ENCODE measurements at regions of chr19 and their contacts with region 1.

Region 1: DNA sequence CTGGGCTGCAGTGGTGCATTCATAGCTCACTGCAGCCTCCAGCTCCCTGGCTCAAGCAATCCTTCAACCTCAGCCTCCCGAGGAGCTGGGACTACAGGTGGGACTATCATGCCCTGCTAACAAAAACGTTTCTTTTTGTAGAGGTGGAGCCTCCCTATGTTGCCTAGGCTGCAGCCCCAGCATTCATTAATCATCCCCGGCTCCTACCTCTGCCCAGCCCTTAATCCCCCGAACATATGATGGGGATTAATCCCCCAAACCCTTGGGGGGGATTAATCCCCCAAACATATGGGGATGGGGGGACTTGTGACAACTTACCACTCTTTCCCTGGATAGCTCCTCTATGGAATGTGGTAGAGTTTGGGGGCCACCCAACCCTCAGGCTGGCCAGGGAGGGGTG is 45.9 kb downstream of the SUGP2 start:
- DNase-seq: no peak
- H3K4me3 ChIP-seq: no peak overlapping the region
- H3K27ac ChIP-seq: no peak overlapping the region
- H3K4me1 ChIP-seq: peaks cover 2 to 18% (median 11%) of the 10 kb centered on the region in 4 experiments
- H3K27me3 ChIP-seq: peaks cover 0 to 7% (median 0%) of the 10 kb centered on the region in 5 experiments

Region 2: DNA sequence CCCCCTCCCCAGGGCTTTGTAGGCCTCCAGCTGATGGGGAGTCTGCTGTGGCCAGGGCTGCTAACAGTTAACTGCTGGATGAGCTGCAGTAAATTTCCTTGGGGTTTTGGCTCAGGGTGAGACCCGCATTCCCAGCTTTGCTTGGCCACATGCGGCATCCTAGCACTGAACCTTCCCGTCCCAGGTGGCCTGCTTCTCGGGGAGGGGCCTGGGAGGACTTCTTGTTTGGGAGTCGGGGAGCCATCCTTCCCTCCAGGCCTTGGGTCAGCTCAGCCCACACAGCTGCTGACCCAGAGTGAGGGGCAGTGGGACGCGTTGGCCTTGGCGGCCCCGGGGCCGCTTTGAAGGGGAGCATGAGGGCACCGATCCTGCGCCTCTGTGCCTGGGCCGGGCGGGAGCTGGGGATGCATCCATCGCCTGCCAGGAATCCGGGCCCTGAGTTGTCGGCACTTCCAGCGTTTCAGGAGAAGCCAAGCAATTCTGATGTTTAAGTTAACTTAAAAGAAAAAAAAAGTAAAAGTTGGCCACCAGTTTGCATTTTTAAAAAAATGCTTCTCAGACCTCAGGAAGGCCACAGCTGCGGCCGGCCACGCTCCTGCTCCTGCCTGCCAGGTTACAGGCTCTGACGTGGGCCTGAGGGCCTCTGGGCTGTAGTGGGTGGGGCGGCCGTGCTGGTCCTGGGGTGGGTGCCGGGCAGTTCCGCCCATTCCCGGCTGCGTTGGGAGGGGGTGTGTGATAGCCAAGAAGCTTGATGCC is 276.3 kb before region 1 on chr19:
- CTCF ChIA-PET with region 1: no interaction called
- POLR2A ChIA-PET with region 1: no interaction called
- DNase-seq: no peak
- H3K4me3 ChIP-seq: no peak overlapping the region
- H3K27ac ChIP-seq: no peak overlapping the region
- H3K4me1 ChIP-seq: peaks cover 0 to 20% (median 15%) of the 10 kb centered on the region in 4 experiments
- H3K27me3 ChIP-seq: no peaks in the 10 kb centered on the region

Region 3: DNA sequence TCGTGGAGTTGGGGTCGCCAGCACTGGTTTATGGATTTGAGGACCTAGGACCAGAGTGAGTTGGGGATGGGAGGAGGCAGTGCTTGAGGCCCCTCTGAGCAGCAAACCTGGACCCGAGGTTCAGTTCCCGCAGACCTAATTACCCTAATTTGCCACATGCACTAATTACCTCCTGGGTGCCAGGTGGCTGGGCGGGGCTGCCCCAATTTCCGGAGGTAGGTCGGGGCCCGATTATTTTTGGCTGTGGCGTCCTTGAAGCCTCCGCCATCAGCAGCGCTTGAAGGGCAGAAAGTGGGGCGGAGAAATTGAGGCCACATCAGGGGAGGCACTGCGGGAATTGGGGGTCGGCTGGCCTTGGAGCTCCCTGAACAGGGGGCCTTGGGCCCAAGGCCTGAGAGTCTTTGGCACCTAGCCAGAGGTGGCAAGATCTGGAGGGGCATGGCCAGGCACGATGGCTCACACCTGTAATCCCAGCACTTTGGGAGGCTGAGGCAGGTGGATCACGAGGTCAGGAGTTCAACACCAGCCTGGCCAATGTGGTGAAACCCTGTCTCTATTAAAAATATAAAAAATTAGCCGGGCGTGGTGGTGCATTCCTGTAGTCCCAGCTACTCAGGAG is 40.4 kb before region 1 on chr19:
- CTCF ChIA-PET with region 1: no interaction called
- POLR2A ChIA-PET with region 1: no interaction called
- DNase-seq: no peak
- H3K4me3 ChIP-seq: no peak overlapping the region
- H3K27ac ChIP-seq: no peak overlapping the region
- H3K4me1 ChIP-seq: no peaks in the 10 kb centered on the region
- H3K27me3 ChIP-seq: peaks cover 0 to 8% (median 0%) of the 10 kb centered on the region in 5 experiments

Region 4: GRCh38 chr19:18967358-18968146 is 19.9 kb before region 1 on chr19:
- CTCF ChIA-PET with region 1: interaction called, 10 read pairs
- POLR2A ChIA-PET with region 1: no interaction called
- DNase-seq: peak; percentile 52 to 90 (median 88)
- H3K4me3 ChIP-seq: peak overlapping the region in 3 of 7 experiments; percentile 1 to 31 (median 19)
- H3K27ac ChIP-seq: peak overlapping the region; percentile 58 to 65
- H3K4me1 ChIP-seq: peaks cover 0 to 23% (median 18%) of the 10 kb centered on the region in 4 experiments
- H3K27me3 ChIP-seq: no peaks in the 10 kb centered on the region

Region 5: GRCh38 chr19:19032420-19033175 is 45.1 kb after region 1 on chr19:
- CTCF ChIA-PET with region 1: no interaction called
- POLR2A ChIA-PET with region 1: no interaction called
- DNase-seq: peak; percentile 91 to 96 (median 96)
- H3K4me3 ChIP-seq: peak overlapping the region; percentile 75 to 97 (median 89)
- H3K27ac ChIP-seq: peak overlapping the region; percentile 75 to 92
- H3K4me1 ChIP-seq: peaks cover 0 to 31% (median 21%) of the 10 kb centered on the region in 4 experiments
- H3K27me3 ChIP-seq: no peaks in the 10 kb centered on the region

Measured in common myeloid progenitor, CD34-positive (primary cell).